Mammary epithelial cell (primary cell): ENCODE measurements at regions of chr7 and their contacts with region 1.

Region 1: GRCh38 chr7:34091323-34091917 is 186.1 kb downstream of the BMPER start:
- DNase-seq: peak; percentile 42
- H3K4me3 ChIP-seq: no peak overlapping the region
- H3K27ac ChIP-seq: no peak overlapping the region
- H3K4me1 ChIP-seq: peaks cover 15% of the 10 kb centered on the region
- H3K27me3 ChIP-seq: no peaks in the 10 kb centered on the region
- CTCF ChIP-seq: peak; percentile 64 to 72

Region 2: DNA sequence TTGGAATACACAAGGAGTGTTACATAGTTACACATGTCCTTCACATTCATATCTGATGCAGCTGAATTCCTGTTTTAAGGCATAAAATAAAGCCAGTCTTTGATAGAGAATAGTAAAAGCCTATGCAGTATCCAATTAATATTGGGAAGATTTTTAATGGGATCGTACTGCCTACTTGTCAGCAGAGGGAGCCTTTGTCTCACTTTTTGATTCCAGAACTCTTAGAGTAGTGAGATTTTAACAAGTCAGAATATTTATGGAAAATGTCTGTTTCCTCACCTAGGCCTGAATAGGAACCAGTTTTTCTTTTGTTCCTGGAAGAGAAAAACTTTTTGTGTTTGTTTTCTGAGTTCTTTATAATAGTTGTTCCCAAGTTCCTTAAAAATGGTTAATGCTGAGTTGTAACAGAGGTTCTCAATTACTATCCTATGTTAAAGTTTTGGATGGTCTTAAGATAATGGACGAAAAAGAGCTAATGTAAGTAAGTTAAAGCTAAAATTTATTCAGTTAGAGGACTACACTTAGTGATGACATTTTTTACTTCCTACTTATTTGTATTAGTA is 848.0 kb before region 1 on chr7:
- CTCF ChIA-PET with region 1: no interaction called
- dilution Hi-C with region 1: no loop called
- in situ Hi-C with region 1: no loop called
- intact Hi-C with region 1: loop called (anchors 5 kb)
- DNase-seq: peak; percentile 27
- H3K4me3 ChIP-seq: no peak overlapping the region
- H3K27ac ChIP-seq: no peak overlapping the region
- H3K4me1 ChIP-seq: no peaks in the 10 kb centered on the region
- H3K27me3 ChIP-seq: no peaks in the 10 kb centered on the region
- CTCF ChIP-seq: peak; percentile 64 to 71

Region 3: DNA sequence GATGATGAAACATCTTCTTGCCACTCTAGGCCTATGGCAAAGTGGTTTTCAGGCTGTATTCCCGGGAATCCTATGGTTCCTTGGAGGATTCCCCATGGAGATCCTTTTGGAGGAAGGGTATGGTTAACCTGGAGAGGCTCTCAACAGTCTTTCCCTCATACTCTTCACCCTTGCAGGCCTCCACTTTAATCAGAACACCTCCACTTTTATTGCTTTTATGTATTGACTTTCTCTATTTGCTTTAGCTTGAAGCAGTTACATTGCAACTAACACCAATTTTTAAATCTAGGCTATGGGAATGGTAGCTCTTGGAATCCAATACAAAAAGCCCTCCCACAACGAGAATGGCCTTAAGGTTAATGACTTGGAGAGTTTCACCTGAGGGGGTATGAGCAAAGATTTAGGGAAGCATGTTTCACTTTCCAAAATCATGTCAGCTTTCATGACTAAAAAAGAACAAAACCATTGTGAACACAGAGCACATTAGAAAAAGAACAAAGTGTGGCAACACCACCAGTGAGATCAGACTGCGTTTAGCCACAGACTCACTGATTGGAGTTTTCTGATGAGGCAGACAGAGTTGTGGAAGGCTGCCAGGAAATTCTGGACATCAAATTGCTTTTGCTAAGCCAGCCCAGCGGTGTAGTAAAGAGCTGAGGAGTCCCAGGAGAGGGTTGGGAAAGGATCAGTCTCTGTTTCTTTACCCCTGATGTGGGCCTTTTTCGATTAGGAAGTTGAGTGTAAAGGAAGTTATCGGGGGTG is 316.5 kb before region 1 on chr7:
- CTCF ChIA-PET with region 1: no interaction called
- dilution Hi-C with region 1: no loop called
- in situ Hi-C with region 1: loop called in 1 of 2 experiments (anchors 10 kb)
- intact Hi-C with region 1: no loop called
- DNase-seq: peak; percentile 91
- H3K4me3 ChIP-seq: no peak overlapping the region
- H3K27ac ChIP-seq: no peak overlapping the region
- H3K4me1 ChIP-seq: no peaks in the 10 kb centered on the region
- H3K27me3 ChIP-seq: no peaks in the 10 kb centered on the region
- CTCF ChIP-seq: no peak

Region 4: DNA sequence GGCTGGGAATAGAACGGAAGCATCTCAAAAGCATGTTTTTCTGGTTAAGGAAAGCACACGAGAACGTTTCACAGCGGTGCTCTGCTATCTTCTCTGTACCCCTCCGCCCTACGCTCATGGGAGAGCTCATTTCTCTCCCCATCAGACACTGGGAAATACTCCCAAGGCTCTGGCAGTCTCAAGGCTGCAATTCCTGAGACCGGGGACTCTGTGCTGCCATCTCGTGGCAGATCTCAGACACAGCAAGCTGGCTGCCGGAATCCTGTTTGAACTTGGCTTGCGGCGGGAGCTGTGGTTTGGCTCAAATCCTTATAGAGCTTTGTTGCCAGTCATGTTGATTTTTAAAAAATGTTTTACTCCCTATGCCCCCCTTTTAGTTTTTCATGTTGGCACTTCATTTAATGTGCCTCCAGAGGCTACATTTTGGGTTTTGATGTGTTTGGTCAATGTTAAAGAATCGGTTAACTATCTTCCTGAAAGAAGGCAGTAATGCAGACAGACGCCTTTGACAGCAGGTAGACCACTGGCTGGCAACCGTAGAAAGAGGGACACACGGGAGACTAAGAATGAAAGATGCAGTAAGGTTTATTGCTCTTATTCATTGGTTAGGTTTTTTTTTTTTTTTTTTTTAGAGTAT is 158.5 kb before region 1 on chr7:
- CTCF ChIA-PET with region 1: interaction called, 14 read pairs
- dilution Hi-C with region 1: no loop called
- in situ Hi-C with region 1: no loop called
- intact Hi-C with region 1: loop called (anchors 5 kb)
- DNase-seq: peak; percentile 82
- H3K4me3 ChIP-seq: peak overlapping the region in 1 of 3 experiments; percentile 7
- H3K27ac ChIP-seq: peak overlapping the region; percentile 4
- H3K4me1 ChIP-seq: peaks cover 19% of the 10 kb centered on the region
- H3K27me3 ChIP-seq: no peaks in the 10 kb centered on the region
- CTCF ChIP-seq: peak; percentile 97 to 99

Region 5: GRCh38 chr7:34133983-34134782 is 42.8 kb after region 1 on chr7:
- CTCF ChIA-PET with region 1: interaction called, 3 read pairs
- dilution Hi-C with region 1: no loop called
- in situ Hi-C with region 1: no loop called
- intact Hi-C with region 1: loop called (anchors 1 kb)
- DNase-seq: peak; percentile 75
- H3K4me3 ChIP-seq: peak overlapping the region in 2 of 3 experiments; percentile 30 to 32
- H3K27ac ChIP-seq: peak overlapping the region; percentile 98
- H3K4me1 ChIP-seq: peaks cover 26% of the 10 kb centered on the region
- H3K27me3 ChIP-seq: no peaks in the 10 kb centered on the region
- CTCF ChIP-seq: peak; percentile 83 to 84

Region 6: DNA sequence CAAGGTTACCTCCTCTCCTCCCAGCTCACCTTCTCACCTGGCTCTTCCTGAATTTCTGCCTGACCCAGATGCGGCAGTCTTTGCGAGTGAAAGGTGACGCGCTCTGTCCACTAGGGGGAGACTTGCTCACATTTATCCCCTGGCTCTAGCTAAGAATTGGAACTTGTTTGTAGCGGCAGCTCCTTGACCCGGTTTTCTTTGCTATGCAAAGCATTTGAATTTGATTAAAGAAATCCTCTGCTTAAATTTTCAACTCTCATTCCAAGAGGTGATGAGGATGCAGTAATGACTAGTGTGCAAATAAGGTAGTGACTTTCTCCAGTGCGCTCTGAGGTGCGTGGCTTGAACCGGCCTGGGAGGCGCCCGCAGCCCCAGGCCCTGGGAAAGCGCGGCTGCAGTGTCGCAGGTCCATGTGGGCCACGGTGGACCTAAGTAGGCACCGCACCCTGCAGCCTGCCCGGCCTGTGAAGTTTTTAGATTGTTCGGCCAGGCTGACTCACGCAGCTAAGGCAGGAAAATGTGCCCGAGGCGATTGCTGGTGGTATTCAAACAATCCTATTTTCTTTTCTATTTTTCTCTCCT is 229.7 kb after region 1 on chr7:
- CTCF ChIA-PET with region 1: interaction called, 6 read pairs
- dilution Hi-C with region 1: no loop called
- in situ Hi-C with region 1: no loop called
- intact Hi-C with region 1: loop called (anchors 1 kb)
- DNase-seq: peak; percentile 73
- H3K4me3 ChIP-seq: peak overlapping the region; percentile 34 to 42 (median 35)
- H3K27ac ChIP-seq: peak overlapping the region; percentile 49
- H3K4me1 ChIP-seq: peaks cover 19% of the 10 kb centered on the region
- H3K27me3 ChIP-seq: no peaks in the 10 kb centered on the region
- CTCF ChIP-seq: peak; percentile 86 to 92

Region 7: DNA sequence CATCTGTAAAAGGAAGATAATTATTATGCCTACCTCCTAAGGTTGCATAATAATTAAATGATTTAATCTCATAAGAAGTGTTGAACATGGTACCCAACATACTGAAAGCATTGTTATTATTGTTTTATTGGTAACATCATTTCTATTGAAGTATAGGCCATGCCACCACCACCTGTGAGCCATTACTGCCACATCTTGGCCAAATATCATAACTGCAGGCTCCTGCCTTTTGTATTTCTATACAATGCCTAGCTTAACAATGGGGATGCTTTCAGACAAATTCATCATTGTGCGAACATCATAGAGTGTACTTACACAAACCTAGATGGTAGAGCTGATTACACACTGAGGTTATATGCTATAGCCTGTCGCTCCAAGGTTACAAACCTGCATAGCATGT is 505.5 kb after region 1 on chr7:
- CTCF ChIA-PET with region 1: no interaction called
- dilution Hi-C with region 1: no loop called
- in situ Hi-C with region 1: no loop called
- intact Hi-C with region 1: loop called (anchors 1 kb)
- DNase-seq: peak; percentile 16
- H3K4me3 ChIP-seq: no peak overlapping the region
- H3K27ac ChIP-seq: no peak overlapping the region
- H3K4me1 ChIP-seq: no peaks in the 10 kb centered on the region
- H3K27me3 ChIP-seq: no peaks in the 10 kb centered on the region
- CTCF ChIP-seq: peak; percentile 72 to 74